Activated naive CD4-positive, alpha-beta T cell treated with anti-CD3 and anti-CD28 coated beads for 36 hours (primary cell): ENCODE measurements at regions of chr1 and their contacts with region 1.

Region 1: DNA sequence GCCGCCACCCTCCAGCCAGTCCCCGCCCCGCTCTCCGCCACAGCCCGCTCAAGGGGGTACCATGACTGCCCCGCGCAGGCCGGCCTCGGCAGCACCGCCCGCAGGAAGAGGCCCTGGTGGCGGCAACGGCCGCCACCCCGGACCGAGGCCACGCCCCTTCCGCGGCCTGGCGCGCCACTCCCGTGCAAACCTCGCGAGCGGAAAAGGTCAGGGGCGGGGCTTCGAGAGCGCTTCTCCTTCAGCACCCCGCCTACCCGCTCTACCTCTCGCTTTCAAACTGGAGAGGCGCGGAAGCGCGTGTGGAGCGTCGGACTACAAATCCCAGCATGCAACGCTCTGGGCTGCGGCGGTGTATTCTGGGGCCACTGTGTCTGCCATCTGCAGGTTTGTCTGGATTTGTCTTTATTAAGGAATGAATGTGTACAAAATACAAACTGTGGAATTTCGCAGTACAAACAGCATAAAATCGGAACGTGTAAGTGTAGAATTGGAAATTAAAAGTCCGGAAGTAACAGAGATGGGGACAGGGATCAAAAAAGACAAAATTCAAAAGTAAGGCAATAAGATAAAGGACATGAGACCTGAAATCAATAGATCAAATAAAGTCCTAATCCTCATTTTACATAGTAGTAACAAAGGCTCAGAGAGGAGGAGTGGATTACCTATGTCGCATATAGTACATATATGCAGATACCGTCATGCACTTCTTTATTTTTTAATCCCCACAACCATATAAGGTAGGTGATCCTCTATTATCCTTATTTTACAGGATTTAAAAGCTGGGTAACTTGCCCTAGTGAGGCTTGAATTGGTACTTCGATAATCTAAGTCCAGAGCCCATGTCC is 464 bp upstream of the ADSS2 start:
- DNase-seq: peak; percentile 99
- H3K4me3 Mint-ChIP-seq: peak overlapping the region; percentile 97
- H3K27ac Mint-ChIP-seq: peak overlapping the region; percentile 86
- H3K4me1 Mint-ChIP-seq: peaks cover 37% of the 10 kb centered on the region
- H3K27me3 Mint-ChIP-seq: no peaks in the 10 kb centered on the region

Region 2: GRCh38 chr1:243850452-243851256 is 601.5 kb before region 1 on chr1:
- CTCF ChIA-PET with region 1: no interaction called
- intact Hi-C with region 1: loop called (anchors 1 kb)
- DNase-seq: peak; percentile 86
- H3K4me3 Mint-ChIP-seq: peak overlapping the region; percentile 80
- H3K27ac Mint-ChIP-seq: peak overlapping the region; percentile 81
- H3K4me1 Mint-ChIP-seq: peaks cover 30% of the 10 kb centered on the region
- H3K27me3 Mint-ChIP-seq: peaks cover 7% of the 10 kb centered on the region

Region 3: GRCh38 chr1:244341455-244342450 is 110.4 kb before region 1 on chr1:
- CTCF ChIA-PET with region 1: no interaction called
- intact Hi-C with region 1: loop called (anchors 1 kb)
- DNase-seq: peak; percentile 64
- H3K4me3 Mint-ChIP-seq: no peak overlapping the region
- H3K27ac Mint-ChIP-seq: no peak overlapping the region
- H3K4me1 Mint-ChIP-seq: peaks cover 6% of the 10 kb centered on the region
- H3K27me3 Mint-ChIP-seq: peaks cover 5% of the 10 kb centered on the region

Region 4: DNA sequence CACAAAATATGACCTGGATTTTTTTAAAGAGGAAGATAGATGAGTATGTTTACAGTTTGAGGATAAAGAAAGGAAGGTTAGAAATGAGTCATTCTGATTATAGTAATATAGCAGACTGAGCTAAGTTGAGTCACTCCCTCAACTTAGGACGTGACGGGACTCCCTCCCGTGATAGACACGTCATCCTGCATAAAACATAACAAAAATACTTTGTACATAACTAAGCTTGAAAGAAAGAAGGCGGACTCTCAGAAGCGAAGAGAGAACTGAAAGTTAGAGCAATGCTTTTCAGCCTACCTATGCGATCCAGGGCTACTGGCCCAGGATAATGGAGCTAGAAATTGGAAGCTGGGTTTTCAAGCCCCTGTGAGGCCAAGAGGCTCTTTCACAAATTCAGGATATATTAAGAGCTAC is 147.8 kb after region 1 on chr1:
- CTCF ChIA-PET with region 1: no interaction called
- intact Hi-C with region 1: loop called (anchors 1 kb)
- DNase-seq: peak; percentile 79
- H3K4me3 Mint-ChIP-seq: peak overlapping the region; percentile 64
- H3K27ac Mint-ChIP-seq: peak overlapping the region; percentile 87
- H3K4me1 Mint-ChIP-seq: peaks cover 21% of the 10 kb centered on the region
- H3K27me3 Mint-ChIP-seq: peaks cover 2% of the 10 kb centered on the region

Region 5: GRCh38 chr1:244801246-244801645 is 349.1 kb after region 1 on chr1:
- CTCF ChIA-PET with region 1: no interaction called
- intact Hi-C with region 1: loop called (anchors 5 kb)
- DNase-seq: peak; percentile 74
- H3K4me3 Mint-ChIP-seq: no peak overlapping the region
- H3K27ac Mint-ChIP-seq: no peak overlapping the region
- H3K4me1 Mint-ChIP-seq: peaks cover 2% of the 10 kb centered on the region
- H3K27me3 Mint-ChIP-seq: no peaks in the 10 kb centered on the region

Region 6: DNA sequence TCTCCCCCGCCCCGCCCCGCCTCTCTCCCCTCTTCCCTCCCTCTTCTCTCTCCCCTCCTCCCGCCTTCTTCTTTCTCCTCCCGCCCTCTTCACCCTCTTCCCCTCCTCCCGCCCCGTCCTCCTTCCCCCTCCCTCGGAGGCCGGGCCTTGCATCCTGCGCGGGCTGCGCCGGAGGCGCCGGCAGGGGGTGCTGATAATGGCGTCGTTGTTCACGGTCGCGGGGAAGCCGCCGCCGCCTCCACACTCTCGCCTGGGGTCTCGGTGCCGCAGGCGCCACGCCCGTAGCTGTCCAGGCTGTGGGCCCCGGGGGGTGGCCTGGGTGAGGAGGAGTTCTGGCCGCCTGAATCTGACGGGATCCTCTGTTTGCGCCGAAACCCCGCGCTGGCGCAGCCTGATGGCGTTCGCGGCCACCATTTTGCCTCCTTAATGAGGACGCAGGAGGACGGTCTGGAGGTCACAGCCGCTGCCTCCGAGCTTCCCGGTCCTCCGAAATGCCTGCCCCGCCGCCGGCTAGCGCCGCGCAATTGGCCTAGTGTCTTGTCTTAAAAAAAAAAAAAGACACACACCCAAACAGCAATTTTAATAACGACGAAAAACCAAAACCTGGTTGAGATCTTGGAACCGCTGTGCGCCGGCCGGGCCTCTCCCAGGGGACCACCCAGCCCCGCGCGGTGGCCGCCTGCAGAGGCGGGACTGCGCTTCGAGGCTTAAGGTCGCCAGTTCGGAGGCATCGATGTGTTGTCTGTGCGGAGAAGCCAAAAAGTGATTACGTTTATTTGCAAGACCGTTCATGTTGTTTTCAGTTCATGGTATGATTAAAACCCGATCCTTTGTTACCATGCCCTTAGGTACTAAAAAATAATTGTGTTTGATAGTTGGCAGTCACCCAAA is 518.7 kb after region 1 on chr1:
- CTCF ChIA-PET with region 1: no interaction called
- intact Hi-C with region 1: loop called (anchors 1 kb)
- DNase-seq: peak; percentile 93
- H3K4me3 Mint-ChIP-seq: peak overlapping the region; percentile 93
- H3K27ac Mint-ChIP-seq: peak overlapping the region; percentile 98
- H3K4me1 Mint-ChIP-seq: peaks cover 11% of the 10 kb centered on the region
- H3K27me3 Mint-ChIP-seq: no peaks in the 10 kb centered on the region